ENCODE measurements at regions of chr2 and their contacts with region 1.

Region 1: GRCh38 chr2:174492963-174493431 is 6.2 kb upstream of the GPR155 start:
- DNase-seq: peak; percentile 83
- H3K4me3 Mint-ChIP-seq: peak overlapping the region; percentile 69
- H3K27ac Mint-ChIP-seq: peak overlapping the region; percentile 96
- H3K4me1 Mint-ChIP-seq: peaks cover 74% of the 10 kb centered on the region
- H3K27me3 Mint-ChIP-seq: no peaks in the 10 kb centered on the region

Region 2: DNA sequence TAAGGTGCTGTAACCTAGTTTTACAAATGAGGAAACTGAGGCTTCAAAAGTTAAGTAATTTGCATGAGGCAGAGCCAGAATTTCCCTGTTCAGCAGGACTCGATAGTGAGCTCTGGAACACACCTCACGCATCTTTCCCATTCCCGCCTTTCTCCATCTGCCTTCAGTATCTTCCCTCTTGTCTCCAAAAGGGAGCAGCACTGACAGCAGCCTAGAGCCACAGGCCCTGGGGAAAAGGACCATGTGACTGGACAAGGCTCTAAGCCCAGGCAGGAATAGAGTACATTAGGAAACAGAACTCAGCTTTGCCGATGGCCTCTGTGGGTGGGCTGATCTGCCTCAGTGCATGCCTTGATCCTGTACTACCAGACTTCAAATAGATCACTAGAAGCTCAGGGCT is 27.7 kb before region 1 on chr2:
- CTCF ChIA-PET with region 1: interaction called, 52 read pairs
- intact Hi-C with region 1: no loop called
- DNase-seq: no peak
- H3K4me3 Mint-ChIP-seq: no peak overlapping the region
- H3K27ac Mint-ChIP-seq: no peak overlapping the region
- H3K4me1 Mint-ChIP-seq: no peaks in the 10 kb centered on the region
- H3K27me3 Mint-ChIP-seq: no peaks in the 10 kb centered on the region

Region 3: GRCh38 chr2:174522553-174522952 is 29.6 kb after region 1 on chr2:
- CTCF ChIA-PET with region 1: interaction called, 3 read pairs
- intact Hi-C with region 1: loop called (anchors 1 kb)
- DNase-seq: no peak
- H3K4me3 Mint-ChIP-seq: no peak overlapping the region
- H3K27ac Mint-ChIP-seq: no peak overlapping the region
- H3K4me1 Mint-ChIP-seq: peaks cover 14% of the 10 kb centered on the region
- H3K27me3 Mint-ChIP-seq: no peaks in the 10 kb centered on the region

Region 4: GRCh38 chr2:174593574-174594203 is 100.7 kb after region 1 on chr2:
- CTCF ChIA-PET with region 1: interaction called, 3 read pairs
- intact Hi-C with region 1: loop called (anchors 1 kb)
- DNase-seq: peak; percentile 87
- H3K4me3 Mint-ChIP-seq: peak overlapping the region; percentile 77
- H3K27ac Mint-ChIP-seq: peak overlapping the region; percentile 99
- H3K4me1 Mint-ChIP-seq: peaks cover 52% of the 10 kb centered on the region
- H3K27me3 Mint-ChIP-seq: no peaks in the 10 kb centered on the region

Region 5: GRCh38 chr2:174682578-174683391 is 189.8 kb after region 1 on chr2:
- CTCF ChIA-PET with region 1: interaction called, 7 read pairs
- intact Hi-C with region 1: loop called (anchors 1 kb)
- DNase-seq: peak; percentile 49
- H3K4me3 Mint-ChIP-seq: peak overlapping the region; percentile 84
- H3K27ac Mint-ChIP-seq: peak overlapping the region; percentile 83
- H3K4me1 Mint-ChIP-seq: peaks cover 50% of the 10 kb centered on the region
- H3K27me3 Mint-ChIP-seq: no peaks in the 10 kb centered on the region

Region 6: DNA sequence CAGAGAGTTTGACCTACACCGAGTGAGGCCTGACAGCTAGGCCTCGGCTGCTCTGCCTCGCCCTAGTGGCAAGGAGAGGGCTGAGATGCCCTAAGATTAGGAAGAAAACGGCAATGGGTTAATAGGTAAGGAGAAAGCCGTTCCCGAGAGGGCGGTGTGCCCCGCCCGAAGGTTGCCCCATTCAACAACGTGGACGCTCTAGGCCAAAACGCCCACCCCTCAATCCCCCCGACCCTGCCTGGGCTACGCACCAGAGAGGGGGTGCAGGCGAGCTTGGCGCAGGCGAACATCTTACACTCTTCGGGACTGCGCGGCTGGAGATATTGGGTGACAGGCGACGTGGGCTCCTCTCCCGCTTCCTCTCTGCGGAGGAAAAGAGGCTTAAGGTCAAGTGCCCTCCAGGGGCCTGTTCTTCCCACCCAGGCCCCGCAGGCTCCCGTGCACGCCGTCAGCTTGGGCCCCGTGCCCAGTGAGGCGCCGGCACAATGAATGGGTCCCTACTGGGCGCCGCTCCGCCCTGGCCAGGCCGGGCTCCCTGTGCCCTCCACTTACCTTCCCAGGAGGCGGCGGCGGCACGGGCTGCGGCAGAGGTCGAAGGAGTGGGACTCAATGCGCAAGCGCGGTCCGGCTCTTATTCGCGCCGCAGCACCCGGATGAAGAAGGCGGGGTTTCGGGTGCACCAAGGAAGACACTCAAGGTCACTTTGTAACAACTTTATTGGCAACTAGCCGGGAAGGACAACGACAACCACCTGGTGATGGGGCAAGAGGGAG is 688.3 kb after region 1 on chr2 and contains the start of gene ATP5MC3:
- CTCF ChIA-PET with region 1: no interaction called
- intact Hi-C with region 1: loop called (anchors 2 kb)
- DNase-seq: peak; percentile 95
- H3K4me3 Mint-ChIP-seq: peak within 1 kb of the TSS; percentile 94
- H3K27ac Mint-ChIP-seq: peak within 1 kb of the TSS; percentile 85
- H3K4me1 Mint-ChIP-seq: peaks cover 29% of the 10 kb centered on the region
- H3K27me3 Mint-ChIP-seq: no peaks in the 10 kb centered on the region
- total RNA-seq, gene ATP5MC3: 308 to 310 TPM